HCT116 (cell line): ENCODE measurements at regions of chr10 and their contacts with region 1.

Region 1: DNA sequence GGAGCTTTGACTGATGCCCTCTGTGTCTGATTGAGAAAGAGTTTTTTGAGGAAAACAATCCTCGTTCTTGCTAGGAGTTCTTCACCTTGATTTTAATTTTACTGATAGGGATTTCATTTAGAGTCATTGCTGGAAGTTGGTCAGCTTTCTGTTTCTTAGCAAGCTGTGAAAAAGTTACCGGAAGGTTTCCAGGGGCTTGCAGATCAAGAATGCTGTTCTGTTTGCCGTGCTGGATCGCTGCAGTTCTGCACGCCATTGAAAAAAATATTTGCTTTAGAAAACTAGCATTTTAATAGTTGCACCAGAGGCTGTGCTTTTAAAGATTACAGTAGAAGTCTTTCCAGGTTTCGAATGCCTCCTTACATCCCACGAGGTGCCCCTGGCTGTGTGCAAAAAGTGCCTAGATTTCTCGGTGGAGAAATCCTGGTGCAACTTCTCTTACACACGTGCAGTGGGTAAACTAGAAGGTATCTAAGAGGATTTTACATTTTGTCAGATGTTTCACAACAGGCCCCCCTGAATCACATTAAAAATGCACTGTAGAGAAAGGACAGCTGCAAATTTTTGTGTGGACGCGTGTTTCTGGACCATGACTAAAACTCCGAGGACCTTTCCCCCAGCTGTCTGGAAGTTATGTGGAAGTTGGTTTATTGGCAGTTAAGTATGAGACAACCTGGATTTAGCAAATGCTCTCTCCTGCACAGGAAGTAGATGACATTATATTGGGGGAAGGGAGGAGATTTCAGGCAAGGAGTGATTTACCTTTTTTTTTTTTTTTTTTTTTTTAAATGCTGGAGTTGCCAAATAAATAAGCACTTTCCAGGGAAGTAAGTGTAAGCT is 5.8 kb downstream of the TCF7L2 start:
- DNase-seq: no peak
- ATAC-seq: no peak
- H3K4me3 ChIP-seq: peak overlapping the region; percentile 73 to 78
- H3K27ac ChIP-seq: peak overlapping the region; percentile 100
- H3K4me1 ChIP-seq: peaks cover 73 to 81% of the 10 kb centered on the region in 2 experiments
- H3K27me3 ChIP-seq: no peaks in the 10 kb centered on the region
- CTCF ChIP-seq: no peak
- POLR2A ChIP-seq: no peak
- RAD21 ChIP-seq: no peak

Region 2: GRCh38 chr10:112532189-112532588 is 423.6 kb before region 1 on chr10:
- CTCF ChIA-PET with region 1: interaction called, 3 read pairs
- POLR2A ChIA-PET with region 1: interaction called, 4 read pairs
- RAD21 ChIA-PET with region 1: no interaction called
- intact Hi-C with region 1: loop called (anchors 1 kb)
- DNase-seq: no peak
- ATAC-seq: no peak
- H3K4me3 ChIP-seq: peak overlapping the region; percentile 24 to 52
- H3K27ac ChIP-seq: peak overlapping the region; percentile 90
- H3K4me1 ChIP-seq: peaks cover 92 to 99% of the 10 kb centered on the region in 2 experiments
- H3K27me3 ChIP-seq: no peaks in the 10 kb centered on the region
- CTCF ChIP-seq: no peak
- POLR2A ChIP-seq: no peak
- RAD21 ChIP-seq: no peak

Region 3: DNA sequence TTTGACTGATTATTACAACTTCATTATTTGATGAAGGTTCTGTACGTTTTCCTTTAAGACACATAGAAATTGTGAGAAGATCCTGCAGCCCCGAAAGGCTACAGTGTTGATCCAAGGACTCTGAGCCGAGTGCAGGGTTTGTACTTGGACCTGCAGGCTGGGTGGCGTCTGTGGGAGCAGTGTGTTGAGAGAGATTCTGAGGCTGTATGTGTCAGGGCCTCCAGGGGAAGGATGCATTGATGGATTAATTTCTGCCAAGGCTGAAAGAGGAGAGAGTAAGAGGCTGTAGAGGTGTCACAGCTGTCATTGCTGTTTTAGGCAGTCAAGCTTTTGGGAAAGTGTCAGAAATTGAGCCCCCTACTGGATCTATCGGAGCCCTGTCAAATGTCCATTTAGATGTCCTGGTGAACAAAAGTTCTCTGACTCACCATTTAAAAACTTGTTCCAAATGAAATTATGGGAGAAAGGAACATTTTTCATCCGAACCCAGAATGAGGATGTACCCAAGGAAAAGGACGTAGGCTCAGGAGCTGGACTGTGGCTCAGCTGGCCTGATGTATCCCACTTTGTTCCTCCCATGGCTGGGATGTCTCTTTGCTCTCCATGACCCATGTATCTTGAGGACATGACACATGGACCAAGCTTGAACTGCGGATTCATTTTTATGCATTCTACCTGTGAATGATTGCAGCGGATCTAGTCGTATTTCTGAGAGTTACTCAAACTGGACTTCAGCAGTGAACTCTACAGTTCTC is 96.5 kb after region 1 on chr10:
- CTCF ChIA-PET with region 1: no interaction called
- POLR2A ChIA-PET with region 1: no interaction called
- RAD21 ChIA-PET with region 1: no interaction called
- intact Hi-C with region 1: no loop called
- DNase-seq: no peak
- ATAC-seq: peak; percentile 57
- H3K4me3 ChIP-seq: no peak overlapping the region
- H3K27ac ChIP-seq: no peak overlapping the region
- H3K4me1 ChIP-seq: peaks cover 38 to 42% of the 10 kb centered on the region in 2 experiments
- H3K27me3 ChIP-seq: no peaks in the 10 kb centered on the region
- CTCF ChIP-seq: peak; percentile 17 to 57 (median 57); a peak in 4 of 6 replicates
- POLR2A ChIP-seq: no peak
- RAD21 ChIP-seq: peak; percentile 57

Region 4: DNA sequence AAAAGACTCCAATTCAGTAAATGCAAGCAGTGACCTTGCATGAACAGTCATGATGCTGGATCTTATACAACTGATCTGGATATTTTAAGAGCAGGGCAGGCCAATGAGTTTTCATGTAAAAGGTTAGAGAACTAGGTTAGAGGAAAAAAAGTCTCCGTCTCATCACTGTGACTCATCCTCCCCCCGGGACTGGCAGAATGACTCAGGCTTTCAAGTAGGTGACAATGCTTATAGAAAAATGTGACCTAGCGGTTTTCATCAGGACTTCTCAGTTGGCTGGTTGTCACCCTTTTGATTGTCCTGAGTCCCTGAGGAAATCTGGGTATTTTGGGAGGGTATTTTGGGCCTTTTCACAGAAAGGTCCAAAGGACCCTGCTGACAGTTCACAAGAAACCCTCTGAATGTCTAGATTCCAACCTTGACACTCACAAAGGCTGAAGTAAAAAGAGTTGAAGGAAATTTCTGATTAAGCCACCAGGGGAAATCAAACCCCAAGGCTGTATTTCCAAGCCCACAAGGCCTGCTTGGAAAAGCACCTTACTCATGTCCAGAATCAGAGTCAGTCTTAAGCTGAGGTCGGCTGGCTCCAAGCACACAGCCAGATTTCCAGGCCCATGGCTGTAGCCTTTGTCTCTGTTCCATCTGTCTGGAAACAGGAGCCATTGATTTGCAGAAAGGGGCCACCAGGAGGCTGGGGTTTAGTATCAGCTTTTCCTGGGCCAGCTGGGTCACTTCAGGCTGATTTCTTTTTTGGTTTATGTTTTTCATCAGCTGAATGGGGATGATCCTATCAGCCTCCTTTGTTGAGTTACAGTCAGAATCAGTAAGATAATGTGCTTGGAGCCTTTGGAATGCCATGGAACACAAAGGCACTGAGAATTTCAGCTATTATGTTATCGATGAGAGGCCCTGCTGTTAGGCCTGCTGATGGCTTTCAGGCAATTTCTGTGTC is 370.6 kb after region 1 on chr10:
- CTCF ChIA-PET with region 1: no interaction called
- POLR2A ChIA-PET with region 1: no interaction called
- RAD21 ChIA-PET with region 1: no interaction called
- intact Hi-C with region 1: no loop called
- DNase-seq: peak; percentile 88
- ATAC-seq: peak; percentile 90
- H3K4me3 ChIP-seq: 0 out of 4 replicates have a peak overlapping the region, but pooled peaks of 1 of the 2 experiments have one; percentile 2
- H3K27ac ChIP-seq: peak overlapping the region; percentile 30; the same call in 1 of the 2 replicates
- H3K4me1 ChIP-seq: peaks cover 18 to 20% of the 10 kb centered on the region in 2 experiments
- H3K27me3 ChIP-seq: peaks cover 19% of the 10 kb centered on the region; the same call in 1 of the 2 replicates
- CTCF ChIP-seq: peak in 2 of 3 experiments; percentile 49 to 68; a peak in 3 of 6 replicates
- POLR2A ChIP-seq: no peak
- RAD21 ChIP-seq: peak; percentile 33